B cell (primary cell): ENCODE measurements at regions of chr6 and their contacts with region 1.

Region 1: DNA sequence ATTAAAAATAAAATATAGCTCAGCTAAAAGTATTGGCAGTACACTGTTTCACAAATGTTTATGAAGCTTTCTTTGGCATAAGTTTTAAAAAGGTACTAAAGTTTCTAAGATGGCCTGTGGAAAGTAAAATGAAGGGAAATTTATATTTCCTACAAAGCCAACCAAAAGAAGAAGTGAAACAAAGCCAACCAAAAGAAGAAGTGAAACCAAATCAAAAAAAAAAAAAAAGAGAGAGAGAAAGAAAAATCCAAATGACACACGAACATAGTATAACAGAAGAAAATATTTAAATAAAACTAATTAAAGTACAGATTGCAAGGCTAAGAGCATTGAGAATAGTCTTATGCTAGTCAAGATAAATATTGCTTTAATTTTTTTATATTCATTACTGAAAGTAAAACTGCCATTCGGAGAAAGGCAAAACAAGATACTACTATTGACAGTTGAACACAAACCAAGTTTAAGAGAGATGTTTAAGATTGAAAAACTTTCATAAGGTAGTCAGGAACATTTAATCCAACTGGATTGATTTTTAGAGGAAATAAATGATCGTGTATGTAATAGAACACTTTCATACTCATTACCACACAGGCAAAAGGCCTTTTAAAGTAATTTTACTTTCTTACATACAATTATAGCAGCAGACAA is 12.8 kb upstream of the KHDRBS2 start:
- DNase-seq: peak; percentile 73
- ATAC-seq: peak; percentile 80
- H3K4me3 ChIP-seq: peak overlapping the region in 1 of 5 experiments; percentile 33
- H3K4me3 Mint-ChIP-seq: peak overlapping the region; percentile 48
- H3K27ac ChIP-seq: peak overlapping the region; percentile 42 to 77
- H3K27ac Mint-ChIP-seq: peak overlapping the region; percentile 90
- H3K4me1 ChIP-seq: peaks cover 11 to 23% of the 10 kb centered on the region in 2 donors
- H3K4me1 Mint-ChIP-seq: peaks cover 23% of the 10 kb centered on the region
- H3K27me3 ChIP-seq: no peaks in the 10 kb centered on the region
- H3K27me3 Mint-ChIP-seq: no peaks in the 10 kb centered on the region
- CTCF ChIP-seq: no peak

Region 2: DNA sequence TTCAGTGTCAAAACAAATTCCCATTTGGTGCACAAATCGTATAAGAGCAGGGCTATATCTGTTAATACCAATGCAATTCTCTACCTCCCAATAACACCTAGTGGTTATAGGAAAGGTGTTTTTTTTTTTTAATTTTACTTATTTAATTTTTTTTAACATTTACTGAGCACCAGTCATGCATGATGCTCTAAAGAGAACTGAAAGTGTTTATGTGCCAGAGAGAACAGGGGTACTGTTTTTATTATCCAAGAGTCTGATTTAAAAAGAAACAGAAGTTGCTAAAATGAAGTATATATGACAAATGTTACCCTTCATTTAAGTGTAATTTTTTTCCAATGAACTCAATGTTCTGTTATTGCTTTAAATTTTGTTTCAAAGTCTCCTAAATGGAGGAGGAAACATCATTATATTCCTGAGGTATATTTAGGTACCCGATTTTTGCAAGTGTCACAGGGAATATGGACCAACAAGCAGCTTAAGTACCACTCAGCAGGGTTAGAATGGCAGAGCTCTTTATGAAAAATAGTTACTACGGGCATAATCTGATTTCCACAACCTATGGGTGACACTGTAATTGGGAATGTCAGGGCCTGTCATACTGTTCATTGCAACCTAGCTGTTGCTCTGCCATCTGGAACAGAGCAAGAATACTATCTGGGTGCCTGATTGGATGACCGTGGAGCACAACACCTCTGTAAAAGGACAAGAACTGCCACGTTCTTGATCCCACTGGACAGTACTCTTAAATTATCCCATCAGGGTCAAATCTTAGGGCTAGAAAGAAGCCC is 208.2 kb before region 1 on chr6:
- CTCF ChIA-PET with region 1: no interaction called
- POLR2A ChIA-PET with region 1: no interaction called
- intact Hi-C with region 1: loop called (anchors 10 kb)
- DNase-seq: peak; percentile 47
- ATAC-seq: peak; percentile 85
- H3K4me3 ChIP-seq: peak overlapping the region in 2 of 5 experiments; percentile 18 to 34
- H3K4me3 Mint-ChIP-seq: peak overlapping the region; percentile 82
- H3K27ac ChIP-seq: peak overlapping the region; percentile 67 to 91
- H3K27ac Mint-ChIP-seq: peak overlapping the region; percentile 94
- H3K4me1 ChIP-seq: peaks cover 25 to 49% of the 10 kb centered on the region in 2 donors
- H3K4me1 Mint-ChIP-seq: peaks cover 48% of the 10 kb centered on the region
- H3K27me3 ChIP-seq: no peaks in the 10 kb centered on the region
- H3K27me3 Mint-ChIP-seq: no peaks in the 10 kb centered on the region
- CTCF ChIP-seq: no peak

Region 3: GRCh38 chr6:62367601-62368000 is 68.7 kb after region 1 on chr6:
- CTCF ChIA-PET with region 1: no interaction called
- POLR2A ChIA-PET with region 1: no interaction called
- intact Hi-C with region 1: loop called (anchors 2 kb)
- DNase-seq: peak; percentile 66
- ATAC-seq: peak; percentile 90
- H3K4me3 ChIP-seq: peak overlapping the region in 4 of 5 experiments; percentile 35 to 54 (median 40)
- H3K4me3 Mint-ChIP-seq: peak overlapping the region; percentile 80
- H3K27ac ChIP-seq: peak overlapping the region; percentile 67 to 87
- H3K27ac Mint-ChIP-seq: peak overlapping the region; percentile 15
- H3K4me1 ChIP-seq: peaks cover 8 to 31% of the 10 kb centered on the region in 2 donors
- H3K4me1 Mint-ChIP-seq: peaks cover 25% of the 10 kb centered on the region
- H3K27me3 ChIP-seq: no peaks in the 10 kb centered on the region
- H3K27me3 Mint-ChIP-seq: no peaks in the 10 kb centered on the region
- CTCF ChIP-seq: no peak

Region 4: DNA sequence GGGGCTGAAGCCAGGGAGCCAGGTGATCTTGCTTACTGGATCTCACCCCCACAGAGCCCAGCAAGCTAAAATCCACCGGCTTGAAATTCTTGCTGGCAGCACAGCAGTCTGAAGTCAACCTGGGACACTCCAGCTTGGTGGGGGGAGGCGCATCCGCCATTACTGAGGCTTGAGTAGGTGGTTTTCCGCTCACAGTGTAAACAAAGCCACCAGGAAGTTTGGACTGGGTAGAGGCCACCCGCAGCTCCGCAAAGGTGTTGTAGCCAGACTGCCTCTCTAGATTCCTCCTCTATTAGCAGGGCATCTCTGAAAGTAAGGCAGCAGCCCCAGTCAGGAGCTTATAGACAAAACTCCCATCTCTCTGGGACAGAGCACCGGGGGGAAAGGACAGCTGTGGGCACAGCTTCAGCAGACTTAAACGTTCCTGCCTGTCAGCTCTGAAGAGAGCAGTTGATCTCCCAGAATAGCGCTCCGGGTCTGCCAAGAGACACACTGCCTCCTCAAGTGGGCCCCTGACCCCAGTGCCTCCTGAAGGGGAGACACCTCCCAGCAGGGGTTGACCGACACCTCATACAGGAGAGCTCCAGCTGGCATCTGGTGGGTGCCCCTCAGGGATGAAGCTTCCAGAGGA is 193.4 kb after region 1 on chr6:
- CTCF ChIA-PET with region 1: no interaction called
- POLR2A ChIA-PET with region 1: no interaction called
- intact Hi-C with region 1: no loop called
- DNase-seq: no peak
- ATAC-seq: no peak
- H3K4me3 ChIP-seq: no peak overlapping the region
- H3K4me3 Mint-ChIP-seq: no peak overlapping the region
- H3K27ac ChIP-seq: no peak overlapping the region
- H3K27ac Mint-ChIP-seq: no peak overlapping the region
- H3K4me1 ChIP-seq: no peaks in the 10 kb centered on the region
- H3K4me1 Mint-ChIP-seq: no peaks in the 10 kb centered on the region
- H3K27me3 ChIP-seq: no peaks in the 10 kb centered on the region
- H3K27me3 Mint-ChIP-seq: no peaks in the 10 kb centered on the region
- CTCF ChIP-seq: no peak